ENCODE measurements at regions of chr14 and their contacts with region 1.

Region 1: GRCh38 chr14:21068521-21069387 is 1.4 kb upstream of the ARHGEF40 start:
- DNase-seq: peak; percentile 66 to 75
- H3K4me3 ChIP-seq: peak overlapping the region; percentile 59 to 63
- H3K27ac ChIP-seq: peak overlapping the region; percentile 95
- H3K4me1 ChIP-seq: no peaks in the 10 kb centered on the region
- H3K27me3 ChIP-seq: no peaks in the 10 kb centered on the region
- CTCF ChIP-seq: peak; percentile 64 to 78 (median 74)
- POLR2A ChIP-seq: no peak

Region 2: DNA sequence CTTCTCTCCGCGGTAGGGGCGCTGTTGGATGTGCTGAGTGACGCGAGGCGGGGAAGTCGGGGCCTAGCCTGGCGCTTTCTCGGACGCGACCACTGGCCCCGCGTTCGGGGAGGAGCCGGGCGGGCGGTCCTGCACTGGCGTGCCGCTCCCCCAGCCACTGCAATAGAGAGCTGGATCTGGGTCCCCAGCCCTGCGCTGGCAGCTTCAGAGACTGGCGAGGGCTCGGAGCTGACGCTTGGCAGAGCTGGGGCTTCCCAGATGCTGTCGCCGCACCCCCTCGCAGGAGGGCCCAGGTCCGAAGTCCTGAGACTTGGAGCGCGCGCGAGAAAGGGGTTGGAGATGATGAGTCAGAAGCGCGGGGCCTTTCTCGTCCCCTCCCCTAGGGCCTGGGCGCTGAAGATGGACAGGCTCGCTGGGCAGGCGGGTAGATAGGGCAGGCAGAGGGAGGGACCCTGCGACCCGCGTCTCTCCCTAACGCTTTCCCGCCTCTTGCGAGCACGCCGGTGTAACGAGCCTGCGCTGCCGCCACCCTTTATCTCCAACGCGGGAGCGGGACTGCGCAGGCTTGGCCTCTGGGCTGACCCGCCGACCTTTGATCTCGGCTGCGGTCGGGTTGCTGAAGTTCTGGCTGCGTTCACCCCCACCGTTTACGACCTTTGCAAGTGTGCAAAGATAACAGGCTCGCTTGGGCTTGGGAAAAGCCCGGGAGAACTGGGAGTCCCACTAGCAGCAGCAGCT is 35.1 kb after region 1 on chr14:
- intact Hi-C with region 1: loop called (anchors 5 kb)
- DNase-seq: peak; percentile 95 to 97
- H3K4me3 ChIP-seq: peak overlapping the region; percentile 65 to 69
- H3K27ac ChIP-seq: peak overlapping the region; percentile 99
- H3K4me1 ChIP-seq: peaks cover 6 to 11% of the 10 kb centered on the region in 2 donors
- H3K27me3 ChIP-seq: no peaks in the 10 kb centered on the region
- CTCF ChIP-seq: peak; percentile 57 to 92 (median 83)
- POLR2A ChIP-seq: peak; percentile 90 to 92

Region 3: GRCh38 chr14:21136024-21136423 is 67.3 kb after region 1 on chr14:
- intact Hi-C with region 1: no loop called
- DNase-seq: no peak
- H3K4me3 ChIP-seq: no peak overlapping the region
- H3K27ac ChIP-seq: no peak overlapping the region
- H3K4me1 ChIP-seq: no peaks in the 10 kb centered on the region
- H3K27me3 ChIP-seq: no peaks in the 10 kb centered on the region
- CTCF ChIP-seq: peak; percentile 13 to 40 (median 19)
- POLR2A ChIP-seq: no peak

Measured in uterus (tissue), 4 donors.